HEK293 (cell line): ENCODE measurements at regions of chr14 and their contacts with region 1.

Region 1: GRCh38 chr14:70073924-70074566 is 114.7 kb downstream of the SLC8A3 start:
- H3K4me3 ChIP-seq: no peak overlapping the region
- H3K27ac ChIP-seq: no peak overlapping the region
- H3K4me1 ChIP-seq: no peaks in the 10 kb centered on the region
- CTCF ChIP-seq: 0 out of 2 replicates have a peak, but pooled peaks have one; percentile 31

Region 2: GRCh38 chr14:69812714-69813113 is 261.3 kb before region 1 on chr14:
- CTCF ChIA-PET with region 1: interaction called, 42 read pairs
- POLR2A ChIA-PET with region 1: no interaction called
- H3K4me3 ChIP-seq: no peak overlapping the region
- H3K27ac ChIP-seq: no peak overlapping the region
- H3K4me1 ChIP-seq: peaks cover 2% of the 10 kb centered on the region; the same call in 1 of the 2 replicates
- CTCF ChIP-seq: peak; percentile 25; the same call in 1 of the 2 replicates

Region 3: GRCh38 chr14:69879175-69880043 is 194.6 kb before region 1 on chr14 and contains the start of gene SMOC1:
- CTCF ChIA-PET with region 1: interaction called, 11 read pairs
- POLR2A ChIA-PET with region 1: interaction called, 3 read pairs
- H3K4me3 ChIP-seq: peak within 1 kb of the TSS; percentile 64
- H3K27ac ChIP-seq: peak within 1 kb of the TSS; percentile 100
- H3K4me1 ChIP-seq: peaks cover 28% of the 10 kb centered on the region
- CTCF ChIP-seq: peak; percentile 39

Region 4: GRCh38 chr14:69997849-69998248 is 76.2 kb before region 1 on chr14:
- CTCF ChIA-PET with region 1: no interaction called
- POLR2A ChIA-PET with region 1: no interaction called
- H3K4me3 ChIP-seq: no peak overlapping the region
- H3K27ac ChIP-seq: peak overlapping the region; percentile 80
- H3K4me1 ChIP-seq: peaks cover 40% of the 10 kb centered on the region
- CTCF ChIP-seq: no peak

Region 5: GRCh38 chr14:70045844-70046535 is 28.1 kb before region 1 on chr14:
- CTCF ChIA-PET with region 1: interaction called, 23 read pairs
- POLR2A ChIA-PET with region 1: no interaction called
- H3K4me3 ChIP-seq: no peak overlapping the region
- H3K27ac ChIP-seq: no peak overlapping the region
- H3K4me1 ChIP-seq: no peaks in the 10 kb centered on the region
- CTCF ChIP-seq: peak; percentile 83

Region 6: GRCh38 chr14:70086685-70087379 is 12.8 kb after region 1 on chr14:
- CTCF ChIA-PET with region 1: interaction called, 19 read pairs
- POLR2A ChIA-PET with region 1: no interaction called
- H3K4me3 ChIP-seq: no peak overlapping the region
- H3K27ac ChIP-seq: no peak overlapping the region
- H3K4me1 ChIP-seq: no peaks in the 10 kb centered on the region
- CTCF ChIP-seq: no peak